AG04449 (cell line): ENCODE measurements at regions of chr4 and their contacts with region 1.

Region 1: GRCh38 chr4:147866532-147867271 is 134.8 kb downstream of the ARHGAP10 start:
- DNase-seq: peak; percentile 55
- H3K4me3 ChIP-seq: no peak overlapping the region
- CTCF ChIP-seq: peak; percentile 89

Region 2: GRCh38 chr4:147590249-147590920 is 276.3 kb before region 1 on chr4:
- CTCF ChIA-PET with region 1: interaction called, 130 read pairs
- POLR2A ChIA-PET with region 1: no interaction called
- DNase-seq: no peak
- H3K4me3 ChIP-seq: no peak overlapping the region
- CTCF ChIP-seq: peak; percentile 55

Region 3: GRCh38 chr4:147638942-147639341 is 227.8 kb before region 1 on chr4:
- CTCF ChIA-PET with region 1: interaction called, 107 read pairs
- POLR2A ChIA-PET with region 1: no interaction called
- DNase-seq: no peak
- H3K4me3 ChIP-seq: no peak overlapping the region
- CTCF ChIP-seq: no peak

Region 4: DNA sequence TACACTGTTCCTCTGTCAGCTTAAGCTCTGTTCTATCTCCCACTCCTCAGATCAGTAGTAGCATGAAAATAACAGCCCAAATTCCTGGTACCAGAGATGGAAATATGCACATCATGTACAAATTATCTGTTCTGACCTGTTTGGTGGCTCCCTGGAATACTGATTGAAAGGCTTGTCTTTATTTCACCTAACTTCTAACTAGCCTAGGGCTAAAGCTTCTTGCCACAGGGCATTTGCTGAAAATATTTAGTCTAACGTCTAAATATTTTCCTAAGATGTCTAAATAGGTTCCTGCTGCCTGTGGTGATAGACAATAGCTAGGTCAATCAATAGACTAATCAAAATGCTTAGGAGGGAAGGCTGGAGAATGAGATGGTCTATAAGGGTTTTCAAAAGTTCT is 169.8 kb before region 1 on chr4:
- CTCF ChIA-PET with region 1: interaction called, 44 read pairs
- POLR2A ChIA-PET with region 1: no interaction called
- DNase-seq: no peak
- H3K4me3 ChIP-seq: no peak overlapping the region
- CTCF ChIP-seq: no peak

Region 5: DNA sequence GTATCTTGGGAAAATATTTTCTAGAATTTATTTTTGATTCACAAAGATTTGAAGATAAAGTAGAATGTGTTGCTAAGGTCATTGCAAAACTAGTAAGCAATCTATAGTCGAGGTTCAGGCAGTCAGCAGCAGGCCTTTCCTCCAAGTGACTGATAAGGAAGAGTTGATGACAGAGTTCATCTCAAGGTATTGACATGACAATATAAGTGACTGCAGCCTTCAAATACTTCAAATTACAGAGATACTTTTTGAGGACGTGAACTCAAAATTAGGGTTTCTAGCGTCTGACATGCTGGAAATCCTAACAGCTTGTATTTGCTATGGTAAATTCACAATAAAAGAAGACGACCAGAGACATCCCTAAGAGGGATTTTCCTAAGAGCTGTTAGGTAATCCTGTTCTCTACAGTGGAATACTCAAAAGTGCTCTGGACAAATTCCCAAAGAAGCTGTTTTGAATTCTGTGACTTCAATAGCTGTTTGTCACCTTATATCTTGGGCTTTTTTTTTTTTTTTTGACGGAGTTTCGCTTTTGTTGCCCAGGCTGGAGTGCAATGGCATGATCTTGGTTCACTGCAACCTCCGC is 127.4 kb before region 1 on chr4:
- CTCF ChIA-PET with region 1: interaction called, 78 read pairs
- POLR2A ChIA-PET with region 1: no interaction called
- DNase-seq: no peak
- H3K4me3 ChIP-seq: no peak overlapping the region
- CTCF ChIP-seq: no peak

Region 6: DNA sequence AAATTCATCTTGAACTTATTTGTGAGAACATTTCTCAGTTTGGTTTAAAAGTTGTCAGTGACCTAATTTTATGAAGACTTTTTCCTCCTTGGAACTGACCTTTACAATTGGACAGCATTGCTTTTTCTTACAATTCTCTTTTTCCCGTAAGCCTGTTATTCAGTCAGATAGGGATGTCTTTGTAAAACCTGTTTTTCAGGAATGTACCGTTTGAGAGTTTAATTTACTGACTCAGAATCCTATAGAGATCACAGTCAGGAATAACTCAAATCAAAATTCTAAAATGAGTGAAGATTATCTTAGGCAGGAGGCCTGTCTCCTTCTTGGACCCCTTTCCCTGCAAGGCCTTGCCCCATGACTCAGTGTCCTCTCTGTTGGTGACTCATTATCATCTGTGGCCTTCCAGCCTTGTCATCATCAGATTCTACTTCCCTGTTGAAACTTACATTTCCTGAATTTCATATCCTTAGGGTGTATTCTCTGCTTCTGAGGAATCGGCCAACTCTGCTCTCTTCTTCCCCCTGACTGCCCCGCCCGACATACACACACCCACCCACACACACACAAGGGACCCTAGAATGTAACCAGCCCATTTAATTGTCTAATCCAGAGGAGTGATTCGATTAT is 35.0 kb before region 1 on chr4:
- CTCF ChIA-PET with region 1: interaction called, 51 read pairs
- POLR2A ChIA-PET with region 1: no interaction called
- DNase-seq: peak; percentile 45
- H3K4me3 ChIP-seq: no peak overlapping the region
- CTCF ChIP-seq: no peak

Region 7: DNA sequence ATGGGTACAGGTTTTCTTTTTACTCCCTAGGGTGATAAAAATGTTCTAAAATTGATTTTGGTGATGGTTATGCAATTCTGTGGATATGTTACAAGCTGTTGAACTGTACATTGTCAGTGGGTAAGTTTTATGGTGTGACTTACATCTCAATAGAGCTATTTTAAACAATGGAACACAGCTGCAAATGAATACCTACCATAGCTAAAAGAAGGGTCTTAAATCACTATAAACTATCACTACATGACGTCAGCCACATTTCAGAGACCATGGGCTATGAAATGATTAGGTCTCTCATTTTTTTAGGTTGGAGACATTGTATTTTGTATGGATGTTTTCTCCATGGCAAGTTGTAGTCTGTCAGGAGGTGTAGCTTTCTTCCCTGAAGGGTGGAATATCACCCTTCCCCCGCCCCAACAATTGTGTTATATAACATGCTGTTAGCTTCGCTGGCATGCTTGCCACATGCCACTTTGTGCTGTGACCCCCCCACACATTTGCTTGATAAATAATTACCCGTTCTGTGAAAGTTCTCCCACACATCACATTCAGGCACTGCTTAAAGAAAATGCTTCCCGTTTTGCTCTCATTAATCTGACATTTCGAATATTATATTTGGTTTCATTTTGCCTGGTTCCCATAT is 24.9 kb after region 1 on chr4:
- CTCF ChIA-PET with region 1: interaction called, 10 read pairs
- POLR2A ChIA-PET with region 1: no interaction called
- DNase-seq: no peak
- H3K4me3 ChIP-seq: no peak overlapping the region
- CTCF ChIP-seq: no peak